ENCODE measurements at regions of chr13 and their contacts with region 1.

Region 1: GRCh38 chr13:40682449-40683240 is 16.2 kb upstream of the FOXO1 start:
- DNase-seq: no peak
- H3K4me3 ChIP-seq: no peak overlapping the region
- H3K27ac ChIP-seq: no peak overlapping the region
- H3K4me1 ChIP-seq: no peaks in the 10 kb centered on the region
- H3K27me3 ChIP-seq: no peaks in the 10 kb centered on the region
- CTCF ChIP-seq: peak; percentile 45 to 47

Region 2: GRCh38 chr13:39684531-39685137 is 998.0 kb before region 1 on chr13:
- CTCF ChIA-PET with region 1: no interaction called
- dilution Hi-C with region 1: no loop called
- in situ Hi-C with region 1: loop called (anchors 25 kb)
- intact Hi-C with region 1: loop called (anchors 1 kb)
- DNase-seq: peak; percentile 16
- H3K4me3 ChIP-seq: no peak overlapping the region
- H3K27ac ChIP-seq: no peak overlapping the region
- H3K4me1 ChIP-seq: no peaks in the 10 kb centered on the region
- H3K27me3 ChIP-seq: no peaks in the 10 kb centered on the region
- CTCF ChIP-seq: peak; percentile 21 to 25

Region 3: DNA sequence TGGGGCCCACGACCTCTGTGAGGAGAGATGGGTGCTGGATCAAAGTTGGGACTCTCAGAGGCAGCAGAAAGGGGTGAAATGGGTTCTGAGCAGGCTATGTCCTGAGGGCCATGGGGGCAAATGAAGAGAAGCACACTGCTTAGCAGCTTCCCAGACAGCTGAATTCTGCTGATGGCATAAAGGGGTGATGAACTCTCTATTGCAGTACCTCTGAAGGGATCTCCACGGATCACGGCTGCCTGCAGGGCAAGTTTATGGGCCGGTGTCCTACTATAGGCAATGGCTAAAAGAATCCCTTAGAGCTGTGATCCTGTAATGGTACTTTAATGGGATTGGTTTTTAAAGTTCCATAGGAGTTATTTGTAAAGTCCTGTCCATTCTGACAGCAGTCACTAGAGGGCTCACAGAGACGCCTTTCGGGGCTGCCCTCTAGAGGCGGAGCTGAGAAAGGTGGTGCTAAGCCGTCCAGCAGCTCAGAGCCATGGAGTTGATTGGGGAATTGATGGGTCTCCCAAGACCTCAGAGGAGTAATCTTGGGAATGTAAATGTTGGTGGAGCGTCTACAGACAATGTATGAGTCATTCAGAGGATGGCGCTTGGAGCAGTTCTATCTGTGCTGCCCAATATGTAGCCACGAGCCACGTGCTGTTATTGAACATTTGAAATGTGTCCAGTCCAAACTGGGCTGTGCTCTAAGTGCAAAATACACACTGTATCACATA is 739.9 kb before region 1 on chr13:
- CTCF ChIA-PET with region 1: interaction called, 4 read pairs
- dilution Hi-C with region 1: no loop called
- in situ Hi-C with region 1: loop called (anchors 25 kb)
- intact Hi-C with region 1: loop called (anchors 1 kb)
- DNase-seq: peak; percentile 68
- H3K4me3 ChIP-seq: no peak overlapping the region
- H3K27ac ChIP-seq: no peak overlapping the region
- H3K4me1 ChIP-seq: peaks cover 8% of the 10 kb centered on the region
- H3K27me3 ChIP-seq: no peaks in the 10 kb centered on the region
- CTCF ChIP-seq: peak; percentile 100

Region 4: DNA sequence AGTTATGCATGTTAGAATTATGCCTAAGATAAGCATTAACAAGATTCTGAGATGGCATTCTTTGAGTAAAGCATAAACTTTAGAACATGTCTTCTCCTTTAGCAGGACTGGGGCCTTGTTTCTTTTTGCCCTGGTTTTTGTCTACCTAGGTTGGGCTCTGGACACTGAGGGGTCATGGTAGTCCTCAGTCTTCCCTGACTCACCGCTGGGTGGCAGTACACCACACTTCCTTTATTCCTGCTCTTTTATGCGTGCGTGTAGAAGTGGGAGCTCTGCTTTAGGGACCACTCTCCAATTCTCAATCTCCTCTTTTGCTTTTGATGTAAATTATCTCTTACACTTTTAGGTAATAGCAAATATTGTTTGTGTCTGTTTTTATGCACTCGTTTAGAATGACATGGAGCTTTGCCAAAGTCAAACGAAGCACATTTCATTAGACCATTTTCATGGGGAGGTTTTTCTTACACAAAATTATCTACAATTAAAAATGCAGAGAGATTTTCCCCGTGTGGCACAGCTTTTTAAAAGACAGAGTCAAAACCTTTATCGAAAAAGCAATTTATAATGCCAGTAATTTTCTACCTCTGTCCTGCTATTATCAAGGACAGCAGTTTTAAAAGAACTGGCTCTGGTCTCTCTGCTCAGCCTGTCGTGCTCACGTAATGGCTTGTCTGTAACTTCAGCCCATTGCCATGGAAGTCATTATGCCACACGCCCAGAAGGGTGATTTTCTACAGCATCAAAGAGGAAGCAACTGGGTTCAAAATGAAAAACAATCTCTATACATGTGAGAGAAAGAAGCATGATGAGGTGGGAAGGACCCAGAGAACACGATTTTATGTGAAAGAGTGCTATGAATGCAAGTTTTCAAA is 613.2 kb before region 1 on chr13:
- CTCF ChIA-PET with region 1: no interaction called
- dilution Hi-C with region 1: no loop called
- in situ Hi-C with region 1: loop called (anchors 10 to 25 kb)
- intact Hi-C with region 1: loop called (anchors 1 kb)
- DNase-seq: peak; percentile 51
- H3K4me3 ChIP-seq: no peak overlapping the region
- H3K27ac ChIP-seq: no peak overlapping the region
- H3K4me1 ChIP-seq: peaks cover 6% of the 10 kb centered on the region
- H3K27me3 ChIP-seq: no peaks in the 10 kb centered on the region
- CTCF ChIP-seq: peak; percentile 89 to 92